Activated CD4-positive, alpha-beta memory T cell treated with anti-CD3 and anti-CD28 coated beads for 36 hours (primary cell): ENCODE measurements at regions of chr1 and their contacts with region 1.

Region 1: GRCh38 chr1:155540000-155540874 is 22.4 kb downstream of the ASH1L start:
- DNase-seq: peak; percentile 43
- H3K4me3 Mint-ChIP-seq: no peak overlapping the region
- H3K27ac Mint-ChIP-seq: peak overlapping the region; percentile 90
- H3K4me1 Mint-ChIP-seq: peaks cover 65% of the 10 kb centered on the region
- H3K27me3 Mint-ChIP-seq: no peaks in the 10 kb centered on the region

Region 2: DNA sequence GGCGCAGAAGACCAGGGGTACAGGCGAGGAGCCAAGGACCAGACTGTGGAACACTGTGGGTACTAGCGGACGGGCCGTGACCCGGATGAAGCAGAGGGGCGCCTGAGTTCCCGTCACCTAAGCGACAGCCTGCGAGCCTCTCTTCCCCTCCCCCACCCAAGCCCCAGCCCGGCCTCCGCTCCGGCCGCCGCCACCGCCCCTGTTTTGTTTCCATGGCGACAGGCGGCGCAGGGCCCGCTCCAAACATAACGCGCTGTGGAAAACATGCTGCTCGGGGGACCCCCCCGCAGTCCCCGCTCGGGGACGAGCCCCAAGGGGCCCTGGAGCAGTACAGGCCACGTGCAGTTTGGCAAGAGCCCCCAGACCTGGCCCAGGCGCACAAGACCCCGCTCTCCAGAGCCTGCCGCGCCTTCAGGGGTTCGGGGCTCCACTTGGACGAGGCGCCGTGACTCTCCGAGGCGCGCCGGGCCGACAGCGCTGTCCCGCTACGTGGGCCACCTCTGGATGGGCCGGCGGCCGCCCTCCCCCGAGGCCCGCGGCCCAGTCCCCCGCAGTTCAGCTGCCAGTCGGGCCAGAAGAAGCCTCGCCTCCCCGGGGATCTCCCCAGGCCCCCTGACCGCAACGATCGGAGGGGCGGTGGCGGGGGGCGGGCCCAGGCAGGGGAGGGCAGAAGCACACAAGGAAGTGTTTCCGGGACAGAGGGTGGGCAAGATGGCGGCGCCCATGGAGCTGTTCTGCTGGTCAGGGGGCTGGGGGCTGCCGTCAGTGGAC is 331.5 kb before region 1 on chr1 and contains the start of gene MTX1:
- CTCF ChIA-PET with region 1: no interaction called
- POLR2A ChIA-PET with region 1: no interaction called
- intact Hi-C with region 1: no loop called
- DNase-seq: peak; percentile 92
- H3K4me3 Mint-ChIP-seq: peak within 1 kb of the TSS; percentile 83
- H3K27ac Mint-ChIP-seq: peak within 1 kb of the TSS; percentile 89
- H3K4me1 Mint-ChIP-seq: peaks cover 29% of the 10 kb centered on the region
- H3K27me3 Mint-ChIP-seq: no peaks in the 10 kb centered on the region
- total RNA-seq, gene MTX1: 45.2 to 47.9 TPM

Region 3: DNA sequence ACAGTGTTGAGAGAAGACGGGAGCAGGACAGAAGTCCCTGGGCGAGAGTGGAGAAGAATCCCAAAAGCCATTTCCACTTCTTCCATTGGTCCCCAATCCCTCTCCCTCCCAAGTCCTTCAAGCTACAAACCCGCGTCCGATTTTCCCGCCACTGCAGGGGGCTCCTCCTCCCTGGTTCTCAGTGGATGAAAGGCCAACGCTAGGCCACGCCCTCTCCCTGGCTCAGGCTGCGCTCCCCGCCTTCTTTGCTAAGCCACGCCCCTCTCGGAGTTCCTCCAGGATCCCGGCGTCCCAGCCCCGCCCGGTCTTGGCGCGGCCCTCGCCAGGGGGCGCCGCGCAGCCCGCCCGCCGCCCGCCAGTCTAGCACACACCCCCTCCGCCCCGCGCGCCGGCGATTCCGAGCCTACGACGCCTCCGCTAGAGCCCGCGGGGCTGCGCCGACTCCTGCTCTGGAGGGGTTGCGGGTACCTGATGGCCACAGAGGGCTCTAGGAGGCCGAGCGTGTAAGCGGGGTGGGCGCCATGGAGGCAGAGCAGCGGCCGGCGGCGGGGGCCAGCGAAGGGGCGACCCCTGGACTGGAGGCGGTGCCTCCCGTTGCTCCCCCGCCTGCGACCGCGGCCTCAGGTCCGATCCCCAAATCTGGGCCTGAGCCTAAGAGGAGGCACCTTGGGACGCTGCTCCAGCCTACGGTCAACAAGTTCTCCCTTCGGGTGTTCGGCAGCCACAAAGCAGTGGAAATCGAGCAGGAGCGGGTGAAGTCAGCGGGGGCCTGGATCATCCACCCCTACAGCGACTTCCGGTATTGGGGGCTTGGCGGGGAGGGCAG is 263.0 kb before region 1 on chr1 and contains the start of gene HCN3:
- CTCF ChIA-PET with region 1: no interaction called
- POLR2A ChIA-PET with region 1: no interaction called
- intact Hi-C with region 1: loop called (anchors 5 kb)
- DNase-seq: peak; percentile 96
- H3K4me3 Mint-ChIP-seq: peak within 1 kb of the TSS; percentile 65
- H3K27ac Mint-ChIP-seq: peak within 1 kb of the TSS; percentile 61
- H3K4me1 Mint-ChIP-seq: peaks cover 32% of the 10 kb centered on the region
- H3K27me3 Mint-ChIP-seq: no peaks in the 10 kb centered on the region
- total RNA-seq, gene HCN3: 1.9 to 2.4 TPM

Region 4: DNA sequence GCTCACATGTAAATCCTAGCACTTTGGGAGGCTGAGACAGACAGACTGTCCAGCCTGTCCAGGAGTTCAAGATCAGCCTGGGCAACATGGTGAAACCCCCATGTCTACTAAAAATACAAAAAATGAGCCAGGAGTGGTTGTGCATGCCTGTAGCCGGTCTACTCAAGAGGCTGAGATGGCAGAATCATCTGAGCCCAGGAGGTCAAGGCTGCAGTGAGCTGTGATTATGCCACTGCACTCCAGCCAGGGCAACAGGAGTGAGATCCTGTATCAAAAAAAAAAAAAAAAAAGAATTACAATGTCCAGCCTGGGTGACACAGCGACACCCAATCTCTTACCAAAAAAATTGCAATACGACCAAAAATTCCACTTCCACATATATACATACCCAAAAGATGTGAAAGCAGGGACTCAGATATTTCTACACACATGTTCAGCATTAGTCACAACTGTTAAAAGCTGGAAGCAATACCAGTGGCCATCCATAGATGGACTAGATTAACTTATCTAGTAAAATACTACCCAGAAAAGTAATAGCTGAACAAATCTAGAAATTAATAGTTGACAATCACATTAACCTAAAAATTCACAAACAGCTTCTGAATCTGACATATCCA is 26.8 kb before region 1 on chr1:
- CTCF ChIA-PET with region 1: no interaction called
- POLR2A ChIA-PET with region 1: interaction called, 3 read pairs
- intact Hi-C with region 1: loop called (anchors 1 kb)
- DNase-seq: no peak
- H3K4me3 Mint-ChIP-seq: no peak overlapping the region
- H3K27ac Mint-ChIP-seq: no peak overlapping the region
- H3K4me1 Mint-ChIP-seq: peaks cover 49% of the 10 kb centered on the region
- H3K27me3 Mint-ChIP-seq: no peaks in the 10 kb centered on the region

Region 5: GRCh38 chr1:155553349-155553748 is 13.1 kb after region 1 on chr1:
- CTCF ChIA-PET with region 1: interaction called, 4 read pairs
- POLR2A ChIA-PET with region 1: interaction called, 3 read pairs
- intact Hi-C with region 1: loop called (anchors 2 kb)
- DNase-seq: no peak
- H3K4me3 Mint-ChIP-seq: no peak overlapping the region
- H3K27ac Mint-ChIP-seq: peak overlapping the region; percentile 35
- H3K4me1 Mint-ChIP-seq: peaks cover 41% of the 10 kb centered on the region
- H3K27me3 Mint-ChIP-seq: no peaks in the 10 kb centered on the region

Region 6: DNA sequence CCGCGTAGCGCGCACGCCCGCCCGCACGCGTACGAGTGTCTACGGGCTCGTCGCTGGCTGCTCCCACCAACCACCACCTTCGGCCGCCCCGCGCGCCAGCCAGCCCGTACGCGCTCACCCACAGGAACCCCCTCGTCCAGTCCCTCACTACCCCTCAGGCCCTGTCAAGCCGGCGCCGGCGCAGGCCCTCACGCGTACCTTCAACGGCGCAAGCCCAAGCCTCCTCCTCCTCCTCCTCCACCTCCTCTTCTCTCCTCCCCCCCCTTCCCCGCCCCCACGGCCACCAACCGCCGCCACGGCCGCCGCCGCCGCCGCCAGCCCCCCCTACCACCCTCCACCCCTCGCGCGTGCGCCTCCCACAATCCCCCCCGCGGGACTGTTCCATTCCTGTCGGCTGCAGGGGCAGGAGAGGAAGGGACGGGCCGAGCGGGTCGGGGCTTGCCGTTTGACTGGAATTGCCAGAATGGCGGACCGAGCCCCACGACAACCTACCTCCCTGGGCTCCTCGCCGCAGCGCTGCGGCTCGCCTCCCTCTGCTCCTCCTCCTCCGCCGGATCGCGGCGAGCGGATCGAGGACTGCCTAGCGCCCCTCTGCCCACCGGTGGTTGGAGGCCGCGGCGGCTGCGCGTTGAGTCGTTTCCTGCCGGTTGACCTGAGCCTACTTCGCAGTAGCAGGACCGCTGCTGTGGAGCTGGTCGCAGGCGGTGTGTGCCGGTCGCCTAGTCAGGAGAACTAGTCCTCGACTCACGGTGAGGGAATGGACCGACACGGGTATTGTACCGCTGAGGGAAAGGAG is 22.5 kb after region 1 on chr1 and contains the start of gene ASH1L:
- CTCF ChIA-PET with region 1: no interaction called
- POLR2A ChIA-PET with region 1: interaction called, 19 read pairs
- intact Hi-C with region 1: loop called (anchors 1 kb)
- DNase-seq: peak; percentile 95
- H3K4me3 Mint-ChIP-seq: peak within 1 kb of the TSS; percentile 99
- H3K27ac Mint-ChIP-seq: peak within 1 kb of the TSS; percentile 98
- H3K4me1 Mint-ChIP-seq: peaks cover 46% of the 10 kb centered on the region
- H3K27me3 Mint-ChIP-seq: no peaks in the 10 kb centered on the region
- total RNA-seq, gene ASH1L: 28.8 to 29.6 TPM

Region 7: GRCh38 chr1:155574077-155574476 is 33.8 kb after region 1 on chr1:
- CTCF ChIA-PET with region 1: no interaction called
- POLR2A ChIA-PET with region 1: no interaction called
- intact Hi-C with region 1: no loop called
- DNase-seq: no peak
- H3K4me3 Mint-ChIP-seq: no peak overlapping the region
- H3K27ac Mint-ChIP-seq: no peak overlapping the region
- H3K4me1 Mint-ChIP-seq: peaks cover 18% of the 10 kb centered on the region
- H3K27me3 Mint-ChIP-seq: no peaks in the 10 kb centered on the region

Region 8: GRCh38 chr1:155729031-155729898 is 189.0 kb after region 1 on chr1:
- CTCF ChIA-PET with region 1: no interaction called
- POLR2A ChIA-PET with region 1: no interaction called
- intact Hi-C with region 1: no loop called
- DNase-seq: peak; percentile 39
- H3K4me3 Mint-ChIP-seq: no peak overlapping the region
- H3K27ac Mint-ChIP-seq: no peak overlapping the region
- H3K4me1 Mint-ChIP-seq: no peaks in the 10 kb centered on the region
- H3K27me3 Mint-ChIP-seq: no peaks in the 10 kb centered on the region